Heart right ventricle (tissue), 16 donors: ENCODE measurements at regions of chr17 and their contacts with region 1.

Region 1: DNA sequence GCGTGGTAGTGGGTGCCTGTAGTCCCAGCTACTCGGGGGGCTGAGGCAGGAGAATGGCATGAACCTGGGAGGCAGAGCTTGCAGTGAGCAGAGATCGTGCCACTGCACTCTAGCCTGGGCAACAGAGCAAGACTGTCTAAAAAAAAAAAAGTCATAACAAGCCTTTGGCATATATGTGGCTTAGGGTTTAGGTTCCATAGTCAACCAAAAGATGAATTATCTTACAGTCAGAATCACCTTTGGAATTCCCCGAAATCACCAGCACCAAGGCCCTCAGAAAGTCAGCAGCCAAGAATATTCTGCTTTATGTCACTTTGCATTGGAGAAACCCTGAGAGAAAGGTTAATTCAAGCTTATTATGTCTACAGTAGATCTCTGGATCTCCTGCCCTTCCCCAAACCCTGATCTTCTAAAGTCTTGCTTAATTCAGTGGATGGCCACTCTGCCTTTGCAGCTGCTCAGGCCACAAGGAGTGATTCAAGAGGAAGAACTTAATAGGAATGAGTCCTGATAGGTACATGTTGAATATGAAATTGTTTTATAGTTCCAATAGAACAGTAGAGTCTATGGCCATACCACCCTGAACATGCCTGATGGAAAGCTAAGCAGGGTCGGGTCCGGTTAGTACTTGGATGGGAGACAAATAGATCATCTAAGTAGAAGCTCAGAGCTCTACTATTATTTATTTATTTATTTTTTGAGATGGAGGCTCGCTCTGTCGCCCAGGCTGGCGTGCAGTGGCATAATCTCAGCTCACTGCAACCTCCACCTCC is 196.0 kb upstream of the CACNG5 start:
- DNase-seq: no peak
- ATAC-seq: no peak
- H3K4me3 ChIP-seq: no peak overlapping the region
- H3K27ac ChIP-seq: no peak overlapping the region
- H3K4me1 ChIP-seq: no peaks in the 10 kb centered on the region
- H3K27me3 ChIP-seq: no peaks in the 10 kb centered on the region
- CTCF ChIP-seq: no peak

Region 2: DNA sequence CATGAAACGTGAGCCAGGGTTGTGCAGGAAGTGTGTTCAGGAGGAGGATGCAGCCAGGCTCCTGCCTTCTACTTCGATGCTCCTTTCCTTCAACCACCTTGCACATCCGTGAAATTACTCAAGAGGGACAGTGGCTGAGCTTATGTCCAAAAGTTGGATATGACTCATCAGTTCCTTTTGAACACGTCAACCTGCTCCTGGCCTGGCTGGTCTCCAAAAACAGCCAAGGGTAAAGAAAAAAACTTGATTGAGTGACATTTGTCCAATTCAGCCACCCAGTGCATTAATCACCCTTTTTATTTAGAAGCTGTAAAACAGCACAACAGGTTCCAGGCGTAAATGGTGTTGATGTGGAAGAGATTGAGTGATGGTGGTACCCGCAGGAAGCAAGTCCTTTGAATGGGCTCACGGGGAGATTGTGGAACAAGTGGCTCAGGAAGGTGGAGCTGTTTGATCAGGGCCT is 22.5 kb after region 1 on chr17:
- intact Hi-C with region 1: loop called in 1 of 10 experiments (anchors 2 kb)
- DNase-seq: no peak
- ATAC-seq: peak in 2 of 8 donors; percentile 48 to 61
- H3K4me3 ChIP-seq: no peak overlapping the region
- H3K27ac ChIP-seq: no peak overlapping the region
- H3K4me1 ChIP-seq: peaks cover 0 to 27% (median 11%) of the 10 kb centered on the region in 9 donors
- H3K27me3 ChIP-seq: no peaks in the 10 kb centered on the region
- CTCF ChIP-seq: no peak

Region 3: DNA sequence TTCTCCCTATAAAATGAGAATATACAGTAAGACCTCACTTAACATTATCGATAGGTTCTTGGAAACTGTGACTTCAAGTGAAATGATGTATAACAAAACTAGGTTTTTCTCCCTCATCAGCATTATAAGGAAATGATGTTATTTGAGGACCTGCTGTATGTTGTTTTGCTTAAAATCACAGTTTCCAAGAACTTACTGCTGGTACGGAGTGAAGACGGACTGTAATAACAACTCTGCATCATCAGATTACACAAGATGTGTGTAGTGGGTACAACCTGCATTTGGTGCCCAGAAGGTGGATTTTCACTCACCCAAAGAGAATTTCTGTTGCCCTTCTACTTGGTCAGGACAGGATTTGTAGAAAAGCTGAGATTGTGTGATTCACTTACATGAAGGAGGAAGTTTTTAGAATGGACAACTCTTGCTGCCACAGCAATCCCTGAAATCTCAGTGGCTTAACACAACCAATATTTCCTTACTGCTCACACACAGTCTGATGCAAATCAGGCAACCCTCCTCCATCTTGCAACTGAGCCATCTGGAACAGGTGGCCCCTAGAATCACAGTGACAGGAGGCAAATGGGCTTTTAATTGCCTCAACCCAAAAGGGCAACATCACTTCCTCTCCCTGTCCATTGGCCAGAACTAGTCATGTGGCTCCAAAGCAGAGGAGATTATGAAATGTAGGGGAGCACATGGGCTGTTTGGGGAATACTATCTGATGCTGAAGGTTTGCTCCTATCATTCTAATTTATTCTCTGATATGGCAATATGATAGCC is 128.5 kb after region 1 on chr17:
- intact Hi-C with region 1: no loop called
- DNase-seq: no peak
- ATAC-seq: no peak
- H3K4me3 ChIP-seq: no peak overlapping the region
- H3K27ac ChIP-seq: no peak overlapping the region
- H3K4me1 ChIP-seq: no peaks in the 10 kb centered on the region
- H3K27me3 ChIP-seq: no peaks in the 10 kb centered on the region
- CTCF ChIP-seq: no peak